Activated naive CD4-positive, alpha-beta T cell treated with anti-CD3 and anti-CD28 coated beads for 36 hours (primary cell): ENCODE measurements at regions of chrX and their contacts with region 1.

Region 1: DNA sequence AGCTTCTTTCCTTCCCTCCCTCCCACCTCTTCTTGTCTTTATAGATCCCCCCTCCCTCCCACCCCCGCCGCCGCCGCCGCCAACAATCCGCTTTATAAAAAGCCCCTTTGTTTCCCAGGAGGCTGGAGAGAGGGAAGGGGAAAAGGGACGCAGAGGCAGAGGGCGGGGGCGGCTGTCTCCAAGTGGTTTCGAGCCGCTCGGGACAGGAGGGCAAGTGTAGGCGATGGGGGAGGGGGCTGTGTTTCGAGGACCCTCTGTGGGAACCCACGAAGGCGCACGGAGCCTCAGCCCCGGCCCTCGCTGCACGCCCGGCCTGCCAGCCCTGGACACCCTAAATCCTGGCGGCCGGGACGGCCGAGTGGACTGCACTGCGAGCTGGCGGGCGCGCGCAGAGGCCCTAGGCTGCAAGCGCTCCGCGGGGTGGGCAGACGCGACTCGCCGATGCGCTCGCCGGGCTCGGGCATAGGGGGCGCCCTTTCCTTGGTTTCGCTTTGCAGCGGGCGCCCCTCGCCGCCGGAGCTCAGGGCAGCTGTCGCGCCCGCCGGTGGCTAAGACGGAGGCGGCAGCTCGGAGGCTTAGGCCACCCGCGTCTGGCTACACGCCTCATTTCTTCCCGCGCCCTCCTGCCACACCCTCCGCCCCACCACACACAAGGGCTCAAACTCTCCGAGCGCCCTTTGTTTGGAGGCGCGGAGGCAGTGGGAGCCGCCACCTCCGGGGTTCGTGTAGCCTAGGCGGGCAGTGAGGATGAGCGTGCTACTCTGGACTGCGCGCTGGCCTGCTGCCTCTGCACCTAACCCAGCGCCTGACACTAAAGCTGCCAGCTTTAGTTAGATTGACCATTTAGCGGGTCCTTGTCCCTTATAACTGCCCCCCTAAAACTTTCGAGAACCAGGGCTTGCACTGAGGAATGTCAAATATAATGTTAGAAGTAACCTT is 2.2 kb downstream of the MAMLD1 start:
- DNase-seq: peak; percentile 70
- H3K4me3 Mint-ChIP-seq: peak overlapping the region; percentile 75
- H3K27ac Mint-ChIP-seq: no peak overlapping the region
- H3K4me1 Mint-ChIP-seq: peaks cover 16% of the 10 kb centered on the region
- H3K27me3 Mint-ChIP-seq: peaks cover 13% of the 10 kb centered on the region

Region 2: DNA sequence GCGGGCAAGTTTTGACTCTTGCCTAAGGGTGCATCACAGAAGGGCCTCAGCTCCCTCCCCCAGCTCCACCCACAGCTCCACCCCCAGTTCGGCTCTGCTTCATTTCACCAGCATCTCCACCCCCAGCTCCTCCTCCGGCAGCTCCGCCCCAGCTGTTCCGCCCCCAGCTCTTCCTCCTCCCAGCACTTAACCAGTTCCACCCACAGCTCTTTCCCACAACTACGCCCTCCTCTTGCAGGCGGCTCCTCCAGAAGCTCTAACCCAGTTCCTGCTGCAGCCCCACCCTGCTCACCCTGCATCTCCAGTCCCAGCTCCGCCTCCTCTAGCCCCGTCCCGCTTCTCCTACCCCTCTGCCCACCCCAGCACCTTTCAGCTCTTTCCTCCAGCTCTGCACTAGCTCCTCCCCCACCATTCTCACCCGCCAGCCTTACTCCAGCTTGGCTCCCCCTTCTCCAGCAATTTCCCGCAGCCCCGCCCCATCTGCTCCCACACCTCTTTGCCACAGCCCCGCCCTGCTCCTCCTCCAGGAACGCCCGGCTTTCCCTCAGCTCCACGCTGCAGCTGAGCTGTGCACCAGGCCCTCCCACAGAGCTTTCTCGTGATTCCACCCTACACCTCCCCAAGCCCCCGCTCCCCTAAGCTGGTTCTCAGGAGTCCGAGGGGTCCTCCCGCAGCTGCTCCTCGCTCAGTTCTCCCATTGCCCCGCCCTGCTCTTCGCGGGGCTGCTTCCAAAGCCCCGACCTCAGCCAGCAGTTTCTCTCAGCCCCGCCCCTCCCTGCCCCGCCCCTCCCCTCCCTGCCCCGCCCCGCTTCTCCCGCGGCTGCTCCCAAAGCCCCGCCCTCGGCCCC is 825.8 kb before region 1 on chrX:
- CTCF ChIA-PET with region 1: no interaction called
- intact Hi-C with region 1: loop called (anchors 5 kb)
- DNase-seq: peak; percentile 92
- H3K4me3 Mint-ChIP-seq: peak overlapping the region; percentile 79
- H3K27ac Mint-ChIP-seq: peak overlapping the region; percentile 73
- H3K4me1 Mint-ChIP-seq: peaks cover 2% of the 10 kb centered on the region
- H3K27me3 Mint-ChIP-seq: no peaks in the 10 kb centered on the region

Region 3: DNA sequence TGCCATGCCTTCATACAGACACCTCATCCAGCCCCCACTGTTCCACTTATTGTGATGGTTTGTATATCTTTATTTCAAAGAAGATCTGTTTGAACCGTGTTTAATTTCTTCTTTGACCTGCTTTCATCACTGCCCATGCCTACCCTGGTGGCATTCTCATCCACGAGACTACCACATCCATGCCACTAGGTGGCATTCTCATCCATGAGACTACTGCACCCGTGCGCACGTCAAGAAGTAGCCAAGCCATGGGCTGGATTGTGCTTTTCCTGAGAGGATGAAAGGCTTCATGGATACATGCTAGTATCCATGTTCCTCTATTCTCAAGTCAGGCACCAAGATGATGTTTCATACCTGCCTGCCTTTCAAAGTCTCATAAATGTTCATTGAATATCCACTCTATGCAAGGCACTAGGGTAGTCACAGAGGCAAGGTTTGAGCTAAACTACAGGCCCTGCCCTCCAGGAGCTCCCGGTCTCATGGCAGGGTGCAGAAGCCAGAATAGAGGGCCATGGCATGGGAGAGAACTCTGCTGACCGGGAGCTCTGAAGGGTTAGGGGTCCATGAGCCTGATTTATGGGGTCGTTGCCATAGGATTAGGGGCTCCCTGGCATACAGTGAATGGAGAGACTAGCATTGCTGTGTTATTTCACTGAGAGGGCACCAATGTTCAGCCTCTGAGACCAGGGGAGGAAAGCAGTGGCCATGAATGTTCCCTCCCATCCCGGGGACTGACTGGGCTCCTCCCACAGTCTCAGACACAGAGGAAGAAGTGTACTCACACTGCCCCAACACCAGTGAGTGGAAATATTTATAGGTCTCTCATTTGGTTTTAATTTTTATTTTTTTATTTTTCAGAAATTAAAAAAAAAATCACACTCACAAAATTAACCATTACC is 402.2 kb before region 1 on chrX:
- CTCF ChIA-PET with region 1: no interaction called
- intact Hi-C with region 1: loop called (anchors 2 kb)
- DNase-seq: peak; percentile 39
- H3K4me3 Mint-ChIP-seq: no peak overlapping the region
- H3K27ac Mint-ChIP-seq: no peak overlapping the region
- H3K4me1 Mint-ChIP-seq: peaks cover 2% of the 10 kb centered on the region
- H3K27me3 Mint-ChIP-seq: no peaks in the 10 kb centered on the region

Region 4: DNA sequence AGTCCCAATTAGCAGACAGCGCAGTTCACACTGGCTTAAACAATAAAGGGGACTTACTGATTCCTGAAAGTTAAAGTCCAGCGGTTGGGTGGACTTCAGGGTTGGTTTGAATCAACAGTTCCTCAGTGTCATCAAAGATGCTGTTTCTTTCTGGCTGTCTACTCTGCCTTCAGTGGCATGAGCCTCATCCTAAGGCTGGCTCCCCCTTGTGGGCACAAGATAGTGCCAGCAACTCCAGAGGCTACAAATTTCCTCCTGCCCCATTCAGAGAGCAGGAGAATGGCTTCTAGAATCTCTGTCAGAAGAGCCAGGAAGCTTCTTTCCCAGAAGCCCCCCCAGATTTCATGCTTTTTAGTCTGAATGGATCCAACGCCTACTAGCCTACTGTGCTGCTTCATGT is 120.7 kb after region 1 on chrX:
- CTCF ChIA-PET with region 1: interaction called, 4 read pairs
- intact Hi-C with region 1: loop called (anchors 1 kb)
- DNase-seq: peak; percentile 62
- H3K4me3 Mint-ChIP-seq: no peak overlapping the region
- H3K27ac Mint-ChIP-seq: no peak overlapping the region
- H3K4me1 Mint-ChIP-seq: peaks cover 27% of the 10 kb centered on the region
- H3K27me3 Mint-ChIP-seq: no peaks in the 10 kb centered on the region

Region 5: DNA sequence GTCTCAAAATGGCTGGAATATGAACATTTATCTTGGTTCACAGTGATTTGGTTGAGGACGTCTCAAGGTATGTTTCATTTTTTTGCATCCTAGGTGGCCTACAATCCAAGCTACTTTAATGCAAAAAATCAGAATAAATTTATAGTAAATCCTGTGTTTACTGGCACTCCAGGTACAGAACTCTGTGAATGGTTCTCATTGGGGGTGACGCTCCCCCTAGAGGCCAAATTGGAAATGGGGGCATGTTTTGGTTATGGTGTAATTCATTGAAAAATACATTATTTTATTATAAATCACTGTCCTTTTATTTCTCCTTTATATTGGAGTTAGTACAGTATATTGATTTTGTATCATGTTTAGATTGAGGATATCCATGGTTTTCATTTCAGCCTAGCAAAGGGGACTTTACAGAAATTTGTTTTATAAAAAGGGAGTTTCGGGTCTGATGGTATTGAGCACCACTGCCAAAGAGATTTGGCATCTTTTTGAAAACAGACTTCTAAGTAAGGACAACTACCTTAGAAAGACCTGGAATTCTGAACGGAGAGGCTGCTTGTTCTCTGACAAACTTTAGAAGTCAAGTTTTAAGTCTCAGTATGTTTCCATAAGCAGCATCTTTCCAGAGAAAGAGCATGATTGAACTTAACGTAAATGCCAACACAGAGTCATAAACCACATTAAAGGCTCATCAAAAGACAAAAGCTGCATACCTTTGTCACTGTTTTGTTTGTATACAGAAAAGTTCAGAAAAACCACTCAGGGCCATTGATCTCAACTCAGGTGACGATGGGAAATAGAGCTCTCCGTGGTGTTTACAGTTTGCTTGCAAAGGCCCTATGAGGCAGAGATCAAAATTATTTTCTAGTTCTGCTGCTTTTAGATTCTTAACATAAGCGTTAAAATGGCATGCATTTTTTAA is 222.5 kb after region 1 on chrX:
- CTCF ChIA-PET with region 1: no interaction called
- intact Hi-C with region 1: no loop called
- DNase-seq: peak; percentile 65
- H3K4me3 Mint-ChIP-seq: no peak overlapping the region
- H3K27ac Mint-ChIP-seq: no peak overlapping the region
- H3K4me1 Mint-ChIP-seq: peaks cover 23% of the 10 kb centered on the region
- H3K27me3 Mint-ChIP-seq: no peaks in the 10 kb centered on the region

Region 6: GRCh38 chrX:150643271-150643670 is 278.0 kb after region 1 on chrX:
- CTCF ChIA-PET with region 1: no interaction called
- intact Hi-C with region 1: loop called (anchors 2 kb)
- DNase-seq: no peak
- H3K4me3 Mint-ChIP-seq: no peak overlapping the region
- H3K27ac Mint-ChIP-seq: no peak overlapping the region
- H3K4me1 Mint-ChIP-seq: no peaks in the 10 kb centered on the region
- H3K27me3 Mint-ChIP-seq: no peaks in the 10 kb centered on the region

Region 7: GRCh38 chrX:150693775-150694574 is 328.7 kb after region 1 on chrX:
- CTCF ChIA-PET with region 1: no interaction called
- intact Hi-C with region 1: loop called (anchors 5 kb)
- DNase-seq: peak; percentile 85
- H3K4me3 Mint-ChIP-seq: peak overlapping the region; percentile 90
- H3K27ac Mint-ChIP-seq: peak overlapping the region; percentile 97
- H3K4me1 Mint-ChIP-seq: peaks cover 64% of the 10 kb centered on the region
- H3K27me3 Mint-ChIP-seq: no peaks in the 10 kb centered on the region

Region 8: DNA sequence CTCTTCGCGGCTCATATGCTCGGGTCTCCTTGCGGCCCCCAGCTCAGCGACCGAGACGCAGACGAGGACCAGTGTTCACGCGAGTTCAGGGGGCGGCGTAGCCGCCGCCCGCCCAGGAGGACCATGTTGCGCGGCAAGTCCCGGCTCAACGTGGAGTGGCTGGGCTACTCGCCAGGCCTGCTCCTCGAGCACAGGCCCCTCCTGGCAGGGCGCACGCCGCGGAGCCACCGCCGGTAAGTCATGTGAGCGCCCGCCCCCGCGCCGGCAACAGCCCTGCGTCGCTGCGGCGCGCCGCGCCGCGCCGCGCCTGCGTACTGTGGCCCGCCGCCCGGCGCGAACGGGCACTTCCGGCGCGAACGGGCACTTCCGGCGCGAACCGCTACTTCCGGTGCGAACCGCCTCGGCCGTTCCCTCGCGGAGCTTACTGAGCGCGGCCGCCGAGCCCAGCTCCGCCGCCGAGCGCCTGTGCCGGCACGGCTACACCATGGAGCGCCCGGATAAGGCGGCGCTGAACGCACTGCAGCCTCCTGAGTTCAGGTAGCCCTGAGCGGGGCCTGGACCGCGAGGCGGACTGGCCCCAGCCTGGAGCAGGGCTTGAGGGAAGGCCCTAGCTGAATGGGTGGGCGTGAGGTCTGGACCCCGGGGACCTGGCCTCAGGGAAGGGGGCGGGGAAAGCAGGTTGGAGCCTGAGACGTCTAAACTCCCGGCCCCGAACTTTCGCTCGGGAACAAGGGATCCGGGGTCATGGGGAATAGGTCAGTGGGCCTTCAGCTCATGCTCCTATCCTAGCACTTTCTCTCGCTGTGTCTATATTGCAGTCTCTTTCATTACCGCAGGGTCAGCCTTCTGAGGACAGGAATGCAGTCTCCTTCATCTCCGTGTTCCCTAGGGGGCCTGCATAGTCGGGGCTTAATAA is 1031.8 kb after region 1 on chrX and contains the start of gene VMA21:
- CTCF ChIA-PET with region 1: no interaction called
- intact Hi-C with region 1: loop called (anchors 10 kb)
- DNase-seq: peak; percentile 81
- H3K4me3 Mint-ChIP-seq: peak within 1 kb of the TSS; percentile 87
- H3K27ac Mint-ChIP-seq: peak within 1 kb of the TSS; percentile 96
- H3K4me1 Mint-ChIP-seq: peaks cover 48% of the 10 kb centered on the region
- H3K27me3 Mint-ChIP-seq: no peaks in the 10 kb centered on the region
- total RNA-seq, gene VMA21: 36.5 to 39.7 TPM